K562 (cell line): ENCODE measurements at regions of chr3 and their contacts with region 1.

Region 1: GRCh38 chr3:39447637-39448483 is 19.6 kb upstream of the MOBP start:
- DNase-seq: peak; percentile 85 to 90 (median 90)
- ATAC-seq: peak; percentile 98
- H3K4me3 ChIP-seq: no peak overlapping the region
- H3K27ac ChIP-seq: no peak overlapping the region
- H3K4me1 ChIP-seq: peaks cover 0 to 12% of the 10 kb centered on the region in 2 experiments; a peak in 2 of 5 replicates
- H3K27me3 ChIP-seq: peaks cover 5 to 12% of the 10 kb centered on the region in 2 experiments; a peak in 2 of 5 replicates
- CTCF ChIP-seq: peak; percentile 84 to 92 (median 92)
- EP300 ChIP-seq: no peak
- POLR2A ChIP-seq: no peak
- RAD21 ChIP-seq: peak; percentile 69 to 88

Region 2: DNA sequence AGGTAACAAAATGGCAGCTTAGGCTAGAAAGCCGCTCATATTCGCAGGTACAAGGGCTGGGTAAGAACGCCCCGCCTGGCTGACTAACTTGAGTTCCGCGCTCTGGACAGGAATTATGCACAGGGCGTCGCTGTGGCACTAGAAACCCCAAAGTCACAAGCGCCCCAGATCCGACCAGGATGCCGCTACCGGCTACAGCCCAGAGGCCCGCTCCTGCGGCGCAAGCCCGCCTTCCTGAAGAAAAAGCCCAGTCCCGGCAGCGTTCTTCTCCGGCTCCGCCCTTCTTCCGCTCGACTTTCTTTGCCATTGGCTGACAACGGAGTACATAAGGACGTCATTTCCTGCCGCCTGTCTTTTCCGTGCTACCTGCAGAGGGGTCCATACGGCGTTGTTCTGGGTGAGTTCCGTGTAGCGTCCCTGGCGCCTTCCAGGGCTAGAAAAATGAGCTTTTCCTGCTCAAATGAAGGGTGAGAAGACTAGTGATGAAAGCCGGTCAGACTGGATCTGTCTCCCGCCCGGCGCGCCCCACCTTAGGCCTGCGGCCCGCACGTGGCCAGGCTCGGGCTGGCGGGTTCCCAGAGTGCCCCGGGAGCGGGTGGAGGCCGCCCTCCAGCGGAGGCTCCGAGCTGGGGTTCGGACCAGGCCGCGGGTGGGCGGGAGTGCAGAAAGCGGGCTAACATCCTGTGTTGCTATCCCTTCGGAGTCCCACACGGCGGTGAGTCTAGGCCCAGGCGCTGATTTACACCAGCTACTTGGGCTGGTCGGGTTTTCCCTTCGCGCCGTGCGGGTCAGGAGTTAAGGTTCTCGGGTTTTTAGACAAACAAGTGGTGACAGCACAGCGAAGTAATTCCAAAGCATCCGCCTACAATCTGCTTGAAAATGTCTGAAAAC is 41.2 kb before region 1 on chr3 and contains the start of gene RPSA:
- CTCF ChIA-PET with region 1: no interaction called
- POLR2A ChIA-PET with region 1: interaction called, 3 read pairs
- in situ Hi-C with region 1: no loop called
- intact Hi-C with region 1: loop called (anchors 5 kb)
- DNase-seq: peak; percentile 90 to 99 (median 94)
- ATAC-seq: peak; percentile 92
- H3K4me3 ChIP-seq: peak within 1 kb of the TSS; percentile 61
- H3K27ac ChIP-seq: peak within 1 kb of the TSS; percentile 91
- H3K4me1 ChIP-seq: peaks cover 18 to 29% of the 10 kb centered on the region in 2 experiments; a peak in 4 of 5 replicates
- H3K27me3 ChIP-seq: no peaks in the 10 kb centered on the region
- CTCF ChIP-seq: peak; percentile 48 to 88 (median 84)
- EP300 ChIP-seq: peak; percentile 27
- POLR2A ChIP-seq: peak; percentile 100
- RAD21 ChIP-seq: peak; percentile 51 to 71
- polyA plus RNA-seq, gene RPSA: 2,672 to 2,730 TPM

Region 3: GRCh38 chr3:39414421-39414907 is 33.4 kb before region 1 on chr3:
- CTCF ChIA-PET with region 1: no interaction called
- POLR2A ChIA-PET with region 1: interaction called, 3 read pairs
- in situ Hi-C with region 1: no loop called
- intact Hi-C with region 1: loop called (anchors 2 kb)
- DNase-seq: peak in 2 of 4 experiments; percentile 36 to 38
- ATAC-seq: peak; percentile 57
- H3K4me3 ChIP-seq: no peak overlapping the region
- H3K27ac ChIP-seq: peak overlapping the region; percentile 45; the same call in 1 of the 3 replicates
- H3K4me1 ChIP-seq: peaks cover 5 to 8% of the 10 kb centered on the region in 2 experiments; a peak in 3 of 5 replicates
- H3K27me3 ChIP-seq: no peaks in the 10 kb centered on the region
- CTCF ChIP-seq: no peak
- EP300 ChIP-seq: no peak
- POLR2A ChIP-seq: peak; percentile 80
- RAD21 ChIP-seq: no peak

Region 4: DNA sequence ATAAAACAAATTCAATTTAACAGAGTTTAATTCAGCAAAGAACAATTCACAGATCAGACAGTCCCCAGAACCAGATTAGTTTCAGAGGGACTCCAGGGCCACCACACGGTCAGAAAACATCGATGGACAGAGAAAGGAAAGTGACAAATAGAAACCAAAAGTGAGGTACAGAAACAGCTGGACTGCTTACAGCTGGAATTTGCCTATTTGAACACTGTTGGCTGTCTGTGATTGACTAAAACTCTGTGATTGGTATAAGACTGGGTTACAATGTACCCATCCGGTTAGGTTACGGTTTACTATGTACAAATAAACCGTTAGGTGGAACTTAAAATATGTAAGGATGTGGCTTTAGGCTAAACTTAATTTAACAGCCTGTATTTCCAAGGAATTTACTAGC is 49.9 kb after region 1 on chr3:
- CTCF ChIA-PET with region 1: interaction called, 30 read pairs
- POLR2A ChIA-PET with region 1: no interaction called
- in situ Hi-C with region 1: no loop called
- intact Hi-C with region 1: loop called (anchors 1 kb)
- DNase-seq: no peak
- ATAC-seq: no peak
- H3K4me3 ChIP-seq: no peak overlapping the region
- H3K27ac ChIP-seq: no peak overlapping the region
- H3K4me1 ChIP-seq: peaks cover 0 to 8% of the 10 kb centered on the region in 2 experiments; a peak in 2 of 5 replicates
- H3K27me3 ChIP-seq: peaks cover 18 to 22% of the 10 kb centered on the region in 2 experiments
- CTCF ChIP-seq: no peak
- EP300 ChIP-seq: no peak
- POLR2A ChIP-seq: no peak
- RAD21 ChIP-seq: no peak

Region 5: DNA sequence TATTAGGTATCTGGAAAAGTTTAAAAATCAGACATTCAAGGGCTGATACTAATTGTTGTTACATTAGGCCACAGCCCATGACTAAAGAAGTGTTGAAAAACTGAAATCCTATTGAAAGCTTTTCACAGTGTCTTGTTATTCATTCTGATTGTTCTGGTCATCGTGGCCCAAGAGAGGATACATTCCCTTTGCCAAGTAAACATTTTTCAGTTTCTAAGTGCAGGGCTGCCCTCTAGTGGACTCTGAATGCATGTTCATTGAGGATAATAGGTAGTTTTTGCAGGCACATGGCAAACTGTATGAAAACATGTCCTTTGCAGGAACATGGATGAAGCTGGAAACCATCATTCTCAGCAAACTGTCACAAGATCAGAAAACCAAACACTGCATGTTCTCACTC is 542.7 kb after region 1 on chr3:
- CTCF ChIA-PET with region 1: no interaction called
- POLR2A ChIA-PET with region 1: no interaction called
- in situ Hi-C with region 1: no loop called
- intact Hi-C with region 1: loop called (anchors 5 kb)
- DNase-seq: peak; percentile 70 to 76 (median 72)
- ATAC-seq: peak; percentile 90
- H3K4me3 ChIP-seq: no peak overlapping the region
- H3K27ac ChIP-seq: no peak overlapping the region
- H3K4me1 ChIP-seq: no peaks in the 10 kb centered on the region
- H3K27me3 ChIP-seq: no peaks in the 10 kb centered on the region
- CTCF ChIP-seq: peak; percentile 71 to 82 (median 72)
- EP300 ChIP-seq: no peak
- POLR2A ChIP-seq: no peak
- RAD21 ChIP-seq: peak; percentile 74 to 91

Region 6: GRCh38 chr3:40179016-40179415 is 731.2 kb after region 1 on chr3:
- CTCF ChIA-PET with region 1: no interaction called
- POLR2A ChIA-PET with region 1: no interaction called
- in situ Hi-C with region 1: no loop called
- intact Hi-C with region 1: loop called (anchors 10 kb)
- DNase-seq: peak; percentile 58 to 79 (median 58)
- ATAC-seq: peak; percentile 91
- H3K4me3 ChIP-seq: no peak overlapping the region
- H3K27ac ChIP-seq: no peak overlapping the region
- H3K4me1 ChIP-seq: no peaks in the 10 kb centered on the region
- H3K27me3 ChIP-seq: peaks cover 6 to 15% of the 10 kb centered on the region in 2 experiments; a peak in 2 of 5 replicates
- CTCF ChIP-seq: peak; percentile 78 to 88 (median 83)
- EP300 ChIP-seq: no peak
- POLR2A ChIP-seq: no peak
- RAD21 ChIP-seq: peak; percentile 73 to 84